ENCODE measurements at regions of chr19 and their contacts with region 1.

Region 1: DNA sequence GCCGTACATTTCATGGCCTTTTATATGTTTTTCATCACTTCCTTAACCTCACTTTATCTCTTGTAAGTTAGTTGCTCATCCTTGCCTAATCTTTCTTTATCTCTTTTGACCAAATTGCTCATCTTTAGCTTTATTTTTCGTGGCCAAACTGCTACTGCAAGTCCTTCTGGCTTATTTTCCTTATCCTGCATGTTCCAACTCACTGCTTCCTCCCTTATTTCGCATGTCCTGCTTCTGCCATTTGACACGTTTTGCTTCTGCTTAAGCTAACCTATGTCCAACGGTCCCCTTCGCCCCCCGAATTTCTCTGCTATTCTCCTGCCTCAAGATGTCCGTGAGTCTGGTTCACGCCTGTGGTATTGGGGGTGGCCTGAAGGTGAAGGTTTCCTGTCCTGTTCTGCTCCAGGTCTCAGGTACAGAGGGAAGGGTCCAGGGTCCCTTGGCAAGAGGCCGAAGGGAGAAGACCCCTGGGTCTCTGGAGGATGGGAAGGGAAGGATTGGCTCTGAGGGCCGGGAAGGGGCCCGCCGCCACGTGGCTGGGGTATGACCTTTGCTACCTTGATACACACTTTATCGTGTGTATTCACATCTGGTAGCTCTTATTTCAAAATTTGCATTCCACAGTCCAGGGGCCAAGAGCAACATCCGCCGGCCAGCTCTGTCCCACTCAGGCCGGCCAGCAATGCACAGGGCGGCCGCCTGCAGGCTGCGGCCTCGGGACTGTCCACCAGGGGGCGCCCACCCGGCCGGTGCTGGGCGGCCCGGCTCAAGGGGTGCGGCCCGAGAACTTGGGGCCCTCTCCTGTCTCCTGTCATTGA is 2.9 kb upstream of the C19orf85 start:
- DNase-seq: peak; percentile 48 to 73
- ATAC-seq: peak; percentile 75 to 93
- H3K4me3 ChIP-seq: no peak overlapping the region
- H3K27ac ChIP-seq: peak overlapping the region; percentile 6 to 35; a peak in 3 of 6 replicates
- H3K4me1 ChIP-seq: peaks cover 6% of the 10 kb centered on the region; the same call in 2 of the 3 replicates
- CTCF ChIP-seq: peak; percentile 99
- EP300 ChIP-seq: no peak
- POLR2A ChIP-seq: no peak
- RAD21 ChIP-seq: peak; percentile 57 to 73

Region 2: DNA sequence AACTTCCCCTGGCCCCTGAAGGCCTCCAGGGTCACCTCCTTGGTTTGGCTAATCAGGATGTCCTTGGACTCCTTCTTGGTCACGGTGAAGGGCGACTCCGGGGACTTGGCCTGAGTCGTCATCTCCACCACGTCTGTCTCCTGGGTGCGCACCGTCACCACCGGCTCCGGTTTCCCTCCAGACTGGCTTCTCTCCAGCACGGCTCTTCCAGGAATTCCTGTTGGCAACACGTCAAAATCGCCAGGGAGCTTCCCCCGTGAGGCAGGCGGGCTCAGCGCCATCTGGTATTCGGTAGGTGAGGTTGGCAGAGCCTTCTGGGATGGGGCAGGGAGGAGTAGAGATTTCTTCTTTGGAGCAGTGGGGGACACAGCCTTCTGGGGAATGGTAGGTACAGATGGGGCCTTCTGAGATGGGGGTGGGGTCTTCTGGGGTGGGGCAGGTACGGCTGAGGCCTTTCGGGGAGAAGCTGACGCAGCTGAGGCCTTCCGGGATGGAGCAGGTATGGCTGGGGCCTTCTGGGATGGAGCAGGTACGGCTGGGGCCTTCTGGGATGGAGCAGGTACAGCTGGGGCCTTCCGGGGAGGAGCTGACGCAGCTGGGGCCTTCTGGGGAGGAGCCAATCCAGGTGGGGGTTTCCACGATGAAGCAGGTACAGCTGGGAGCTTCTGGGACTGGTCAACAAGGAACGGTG is 108.4 kb before region 1 on chr19:
- CTCF ChIA-PET with region 1: no interaction called
- POLR2A ChIA-PET with region 1: no interaction called
- DNase-seq: no peak
- ATAC-seq: no peak
- H3K4me3 ChIP-seq: no peak overlapping the region
- H3K27ac ChIP-seq: no peak overlapping the region
- H3K4me1 ChIP-seq: peaks cover 23% of the 10 kb centered on the region
- CTCF ChIP-seq: no peak
- EP300 ChIP-seq: no peak
- POLR2A ChIP-seq: no peak
- RAD21 ChIP-seq: no peak

Region 3: DNA sequence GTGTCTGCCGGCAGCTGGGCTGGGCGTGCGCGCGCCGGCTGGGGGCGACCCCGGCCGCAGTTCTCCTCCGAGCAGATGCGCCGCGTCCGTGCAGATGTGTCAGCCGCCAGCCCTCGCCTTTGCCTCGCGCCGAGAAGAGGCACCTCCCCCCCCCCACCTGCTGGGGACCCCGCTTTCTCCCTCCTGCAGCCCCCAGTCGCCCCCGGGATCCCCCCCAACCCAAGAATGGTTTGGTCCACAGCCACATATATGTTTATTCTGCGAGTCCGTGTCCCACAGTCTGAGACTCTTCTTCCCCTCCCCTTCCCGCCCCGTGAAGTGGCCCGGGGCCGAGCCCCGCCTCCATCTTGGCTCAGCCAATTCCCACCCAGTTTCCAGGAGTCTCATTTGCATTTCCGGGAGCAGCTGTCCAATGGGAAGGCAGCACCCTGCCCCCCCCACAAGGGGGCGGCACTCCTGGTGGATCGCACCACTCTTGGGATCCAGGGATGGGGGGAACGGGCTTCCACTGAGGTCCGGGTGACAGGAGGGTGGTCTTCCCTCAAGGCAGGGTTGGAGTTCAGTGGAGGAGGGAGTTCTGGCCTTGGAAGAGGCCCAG is 14.6 kb before region 1 on chr19:
- CTCF ChIA-PET with region 1: interaction called, 39 read pairs
- POLR2A ChIA-PET with region 1: no interaction called
- DNase-seq: peak; percentile 66 to 80
- ATAC-seq: peak in 1 of 2 experiments; percentile 63; a peak in 3 of 6 replicates
- H3K4me3 ChIP-seq: no peak overlapping the region
- H3K27ac ChIP-seq: no peak overlapping the region
- H3K4me1 ChIP-seq: peaks cover 31% of the 10 kb centered on the region
- CTCF ChIP-seq: no peak
- EP300 ChIP-seq: no peak
- POLR2A ChIP-seq: no peak
- RAD21 ChIP-seq: no peak

Region 4: GRCh38 chr19:55516878-55517620 is 49.6 kb after region 1 on chr19:
- CTCF ChIA-PET with region 1: interaction called, 26 read pairs
- POLR2A ChIA-PET with region 1: no interaction called
- DNase-seq: peak; percentile 97 to 100
- ATAC-seq: peak; percentile 90 to 95
- H3K4me3 ChIP-seq: peak overlapping the region; percentile 35
- H3K27ac ChIP-seq: peak overlapping the region; percentile 78 to 88
- H3K4me1 ChIP-seq: peaks cover 21% of the 10 kb centered on the region
- CTCF ChIP-seq: peak; percentile 97
- EP300 ChIP-seq: no peak
- POLR2A ChIP-seq: peak; percentile 27; the same call in 1 of the 2 replicates
- RAD21 ChIP-seq: peak; percentile 100

Region 5: GRCh38 chr19:55624109-55625003 is 156.9 kb after region 1 on chr19 and contains the start of gene ZNF784:
- CTCF ChIA-PET with region 1: interaction called, 115 read pairs
- POLR2A ChIA-PET with region 1: no interaction called
- DNase-seq: peak; percentile 89 to 96
- ATAC-seq: peak; percentile 74 to 82
- H3K4me3 ChIP-seq: peak within 1 kb of the TSS; percentile 48
- H3K27ac ChIP-seq: peak within 1 kb of the TSS; percentile 89 to 93
- H3K4me1 ChIP-seq: 0 out of 3 replicates have a peak, but pooled peaks cover 7% of the 10 kb centered on the region
- CTCF ChIP-seq: no peak
- EP300 ChIP-seq: no peak
- POLR2A ChIP-seq: peak; percentile 80
- RAD21 ChIP-seq: no peak
- polyA plus RNA-seq, gene ZNF784: 3.5 and 4.1 TPM in 2 replicates